ENCODE measurements at regions of chr7 and their contacts with region 1.

Region 1: DNA sequence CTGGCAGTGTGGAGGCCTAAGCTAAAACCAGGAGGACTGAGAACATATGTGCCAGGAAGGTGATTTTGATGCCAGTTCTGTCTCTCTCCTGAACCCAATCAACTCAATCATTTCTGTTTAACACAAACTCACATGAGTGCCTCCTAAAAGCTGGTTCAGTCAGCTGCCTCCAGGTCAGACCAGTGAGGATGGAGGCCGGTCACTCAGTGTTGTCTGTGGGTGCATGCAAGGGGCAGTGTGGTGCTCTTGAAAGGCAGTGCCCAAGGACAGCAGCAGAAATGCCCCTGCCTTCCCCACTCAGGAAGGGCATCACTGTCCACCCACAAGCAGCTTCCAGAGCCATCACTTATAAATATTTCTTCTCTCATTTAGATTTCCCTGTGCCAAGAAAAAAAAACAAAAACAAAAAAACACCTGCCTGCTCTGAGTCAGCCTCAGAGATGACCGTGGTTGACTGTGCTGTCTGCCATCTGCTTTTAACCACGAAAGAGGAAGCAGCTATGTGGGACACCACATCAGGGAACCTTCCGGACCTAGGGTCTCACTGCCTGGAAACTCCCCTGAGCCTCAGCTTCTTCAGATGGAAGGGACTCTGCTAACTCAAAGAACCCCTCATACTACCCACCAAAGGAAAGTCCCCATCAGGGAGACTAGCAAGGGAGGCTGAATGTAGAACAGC is 39.1 kb downstream of the VOPP1 start:
- H3K4me3 Mint-ChIP-seq: peak overlapping the region; percentile 38
- H3K27ac Mint-ChIP-seq: peak overlapping the region; percentile 98
- H3K4me1 Mint-ChIP-seq: peaks cover 88% of the 10 kb centered on the region
- H3K27me3 Mint-ChIP-seq: no peaks in the 10 kb centered on the region

Region 2: DNA sequence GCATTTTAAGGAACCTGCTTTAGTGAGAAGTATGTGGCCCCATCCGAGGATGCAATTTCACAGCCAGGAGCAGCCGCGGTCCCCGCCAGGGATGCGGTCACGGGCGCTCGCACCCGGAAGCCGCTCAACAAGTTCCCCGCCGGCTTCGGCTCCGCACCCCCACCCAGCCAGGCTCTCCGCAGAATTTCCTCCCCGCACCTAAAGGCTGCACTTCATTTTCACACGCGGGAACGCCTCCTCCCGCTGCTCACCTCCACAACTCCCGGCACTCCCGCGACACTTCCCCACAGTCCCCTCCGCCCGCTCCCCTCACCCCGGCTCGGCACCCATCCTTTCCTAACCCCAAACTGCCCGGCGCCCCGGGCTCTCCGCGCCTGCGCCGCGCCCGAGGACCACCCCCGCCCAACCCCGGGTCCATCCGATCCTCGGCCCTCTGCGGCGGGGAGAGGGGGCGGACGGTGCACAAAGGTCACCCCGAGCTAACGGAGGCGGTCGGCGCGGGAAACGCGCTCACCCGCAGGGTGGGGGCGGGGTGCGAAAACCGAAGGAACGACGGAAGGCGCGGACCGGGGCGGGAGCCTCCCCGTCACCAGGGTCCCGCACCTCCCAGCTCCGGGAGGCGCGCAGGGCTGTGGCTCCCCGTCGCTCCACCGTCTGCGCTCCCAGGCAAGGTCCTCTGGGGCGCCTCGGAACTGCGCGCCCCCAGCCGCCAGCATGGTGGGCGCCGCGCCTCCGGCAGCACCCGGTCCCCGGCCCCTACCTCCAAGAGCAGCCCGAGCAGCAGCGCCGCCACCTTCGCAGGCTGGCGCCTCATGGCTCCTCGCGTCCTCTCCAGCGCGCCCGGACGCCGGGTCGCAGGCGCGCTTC is 38.6 kb after region 1 on chr7:
- intact Hi-C with region 1: loop called (anchors 2 kb)
- H3K4me3 Mint-ChIP-seq: peak overlapping the region; percentile 96
- H3K27ac Mint-ChIP-seq: peak overlapping the region; percentile 95
- H3K4me1 Mint-ChIP-seq: peaks cover 73% of the 10 kb centered on the region
- H3K27me3 Mint-ChIP-seq: peaks cover 11% of the 10 kb centered on the region